Activated T-helper 2 cell treated with anti-CD3 and anti-CD28 coated beads, Interferon-gamma antibody, Interleukin-2, Interleukin-4, amounts not matched to agents 10 μg/mL and 5 μg/mL and 100 μg/mL, durations not matched to agents 14 hours and 24 hours and 36 hours (primary cell): ENCODE measurements at regions of chr6 and their contacts with region 1.

Region 1: DNA sequence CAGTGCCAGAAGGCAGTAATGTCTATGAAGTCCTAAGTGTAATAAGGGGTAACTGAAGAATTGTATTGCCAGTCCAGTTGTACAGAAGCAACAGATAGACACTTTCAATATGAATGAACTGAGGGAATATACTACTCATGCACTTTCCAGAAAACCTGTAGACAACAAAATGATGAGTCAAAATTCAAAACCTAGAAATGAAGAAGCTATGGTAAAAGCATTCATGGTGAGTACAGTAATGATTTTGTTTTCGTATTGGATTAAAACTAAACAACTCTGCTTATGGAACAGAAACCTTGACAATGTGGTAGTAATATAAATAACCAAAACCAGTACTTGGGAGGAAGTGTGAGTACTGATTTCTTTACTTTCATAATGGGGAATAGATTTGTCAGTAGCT is 35.0 kb downstream of the ARMC2 start:
- DNase-seq: no peak
- H3K4me3 Mint-ChIP-seq: no peak overlapping the region
- H3K27ac Mint-ChIP-seq: peak overlapping the region; percentile 84
- H3K4me1 Mint-ChIP-seq: peaks cover 37% of the 10 kb centered on the region
- H3K27me3 Mint-ChIP-seq: peaks cover 19% of the 10 kb centered on the region

Region 2: GRCh38 chr6:108737594-108738546 is 145.3 kb before region 1 on chr6:
- intact Hi-C with region 1: loop called (anchors 5 kb)
- DNase-seq: peak; percentile 13
- H3K4me3 Mint-ChIP-seq: no peak overlapping the region
- H3K27ac Mint-ChIP-seq: no peak overlapping the region
- H3K4me1 Mint-ChIP-seq: peaks cover 9% of the 10 kb centered on the region
- H3K27me3 Mint-ChIP-seq: peaks cover 36% of the 10 kb centered on the region

Region 3: DNA sequence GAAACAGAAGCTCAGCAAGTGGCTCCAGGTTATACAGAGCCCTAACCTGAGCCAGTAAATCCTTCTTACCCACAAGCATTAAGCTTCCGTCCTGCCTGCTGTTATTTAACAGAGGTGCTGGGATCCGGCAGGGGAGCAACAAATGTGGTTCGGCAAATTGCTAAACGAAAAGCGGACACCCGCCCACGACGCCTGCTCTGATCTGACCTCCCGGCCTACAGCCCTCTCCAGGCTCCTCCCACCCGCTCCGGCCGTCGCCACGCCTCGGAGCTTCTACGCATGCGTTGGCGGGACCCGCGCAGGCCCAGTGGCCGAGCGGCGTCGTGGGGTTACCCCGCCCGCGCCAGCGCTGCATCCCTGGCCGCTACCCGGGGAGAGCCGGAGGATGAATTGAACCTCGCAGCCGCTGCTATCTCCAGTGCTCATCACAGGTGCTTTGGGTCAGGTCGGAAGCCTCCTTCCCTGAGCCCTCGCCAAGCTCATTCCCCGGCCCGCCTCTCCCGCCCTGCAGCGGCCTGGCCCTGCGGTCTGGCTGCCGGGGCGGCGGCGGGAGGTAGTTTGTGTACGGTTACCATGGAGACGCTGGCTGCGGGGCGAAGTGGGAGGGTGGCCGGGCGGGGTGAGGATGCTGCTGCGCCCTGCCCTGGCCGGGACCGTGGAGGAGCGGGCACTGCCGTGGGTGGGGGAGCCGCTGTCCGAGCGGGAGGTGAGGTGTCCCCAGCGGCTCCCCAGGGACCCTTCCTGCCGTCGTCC is 34.9 kb before region 1 on chr6 and contains the start of gene ARMC2:
- intact Hi-C with region 1: loop called (anchors 2 kb)
- DNase-seq: peak; percentile 85
- H3K4me3 Mint-ChIP-seq: peak within 1 kb of the TSS; percentile 81
- H3K27ac Mint-ChIP-seq: peak within 1 kb of the TSS; percentile 42
- H3K4me1 Mint-ChIP-seq: peaks cover 22% of the 10 kb centered on the region
- H3K27me3 Mint-ChIP-seq: peaks cover 28% of the 10 kb centered on the region
- total RNA-seq, gene ARMC2: 1.9 and 2.7 TPM in 2 replicates

Region 4: GRCh38 chr6:108921547-108922361 is 38.6 kb after region 1 on chr6:
- intact Hi-C with region 1: loop called (anchors 1 kb)
- DNase-seq: no peak
- H3K4me3 Mint-ChIP-seq: no peak overlapping the region
- H3K27ac Mint-ChIP-seq: peak overlapping the region; percentile 4
- H3K4me1 Mint-ChIP-seq: peaks cover 37% of the 10 kb centered on the region
- H3K27me3 Mint-ChIP-seq: peaks cover 65% of the 10 kb centered on the region

Region 5: DNA sequence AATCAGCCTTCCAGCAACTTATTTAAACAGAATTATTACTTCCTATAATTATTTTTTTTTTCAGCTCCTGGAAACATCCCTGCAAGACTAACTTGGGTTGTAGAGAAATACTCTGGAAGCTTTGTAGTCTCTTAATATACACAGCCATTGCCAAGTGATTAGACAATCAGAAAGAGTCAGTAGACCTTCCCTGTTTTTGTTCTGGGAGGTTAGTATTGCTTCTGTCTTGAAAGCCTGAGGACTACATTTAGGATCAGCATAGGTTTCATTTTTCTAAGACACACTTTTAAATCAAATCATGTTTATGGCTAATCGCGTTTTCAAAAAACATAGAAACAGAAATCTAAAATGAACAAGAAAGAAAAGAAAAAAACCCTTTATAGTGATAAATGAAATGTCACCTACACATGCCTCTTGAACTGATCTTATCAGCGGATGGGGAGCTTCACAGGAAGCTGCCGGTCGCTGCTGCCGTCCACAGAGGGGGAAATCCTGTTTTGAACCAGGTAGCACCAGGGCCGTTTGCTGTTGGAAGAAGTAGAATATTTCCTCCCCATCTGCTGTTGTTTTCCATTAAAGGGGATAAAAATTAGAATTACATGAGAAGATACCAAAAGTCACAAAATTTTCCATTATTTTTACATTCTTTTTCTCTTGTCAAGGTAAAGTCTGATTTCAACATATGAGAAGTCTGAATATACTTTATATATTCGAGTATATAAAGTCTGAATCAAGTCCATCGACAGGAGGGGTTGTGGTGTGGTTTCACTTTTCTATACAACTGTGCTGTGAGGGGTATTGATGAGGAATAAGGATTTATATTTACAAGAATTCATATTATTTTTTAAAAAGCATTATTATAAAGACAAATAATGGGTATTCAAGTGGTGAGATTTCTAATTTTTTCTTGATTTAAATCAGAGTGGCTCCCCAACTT is 59.7 kb after region 1 on chr6:
- intact Hi-C with region 1: loop called (anchors 2 kb)
- DNase-seq: peak; percentile 58
- H3K4me3 Mint-ChIP-seq: peak overlapping the region; percentile 64
- H3K27ac Mint-ChIP-seq: peak overlapping the region; percentile 84
- H3K4me1 Mint-ChIP-seq: peaks cover 59% of the 10 kb centered on the region
- H3K27me3 Mint-ChIP-seq: no peaks in the 10 kb centered on the region

Region 6: GRCh38 chr6:109204511-109204910 is 321.3 kb after region 1 on chr6:
- intact Hi-C with region 1: no loop called
- DNase-seq: no peak
- H3K4me3 Mint-ChIP-seq: no peak overlapping the region
- H3K27ac Mint-ChIP-seq: no peak overlapping the region
- H3K4me1 Mint-ChIP-seq: peaks cover 5% of the 10 kb centered on the region
- H3K27me3 Mint-ChIP-seq: peaks cover 3% of the 10 kb centered on the region